ENCODE measurements at regions of chr18 and their contacts with region 1.

Region 1: DNA sequence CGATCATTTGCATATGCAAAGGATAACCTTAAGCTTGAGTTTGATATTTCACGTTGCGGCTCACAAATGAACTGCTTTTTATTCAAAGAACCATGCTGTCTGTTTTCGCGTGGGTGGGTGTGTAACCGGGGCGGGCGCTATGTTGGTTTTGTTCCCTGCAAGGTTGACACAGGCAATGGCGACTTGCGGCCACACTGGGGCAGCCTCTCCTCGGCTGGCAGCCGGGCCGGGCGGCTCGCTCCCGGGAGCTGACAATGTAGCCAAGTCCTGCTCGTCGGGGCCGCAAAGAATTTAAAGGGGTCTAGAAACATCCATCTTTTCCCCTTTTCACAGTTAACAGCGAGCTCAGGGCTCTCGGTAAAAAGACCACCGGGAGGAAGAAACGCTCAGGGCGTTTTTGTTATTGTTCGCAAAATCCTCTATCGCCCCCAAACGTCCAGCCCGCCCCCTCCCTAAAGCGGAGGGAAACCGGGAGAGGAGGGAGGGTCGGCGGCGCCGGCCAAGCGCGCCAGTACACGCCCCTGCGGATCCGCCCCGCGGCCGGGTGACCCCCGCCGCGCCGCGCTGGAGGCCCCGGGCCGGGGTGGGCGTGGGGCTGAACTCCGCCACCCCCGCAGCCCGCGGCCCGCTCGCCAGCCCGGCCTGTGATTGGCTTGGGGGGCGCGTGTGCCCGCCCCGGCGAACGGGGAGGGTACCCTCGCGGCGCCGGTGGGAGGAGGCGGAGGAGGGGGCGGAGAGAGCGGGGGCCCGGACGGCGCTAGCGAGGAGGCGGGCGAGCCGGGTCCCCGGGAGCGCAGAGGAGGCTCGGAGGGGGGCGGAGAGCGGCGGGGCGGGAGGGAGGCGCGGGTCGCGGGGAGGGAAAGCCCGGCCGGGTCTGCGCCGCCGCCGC is at the start of gene NEDD4L:
- DNase-seq: peak; percentile 55 to 78 (median 73)
- ATAC-seq: peak; percentile 88
- H3K4me3 ChIP-seq: peak within 1 kb of the TSS; percentile 69
- H3K4me3 Mint-ChIP-seq: peak within 1 kb of the TSS; percentile 88 to 96 (median 93)
- H3K27ac ChIP-seq: peak within 1 kb of the TSS; percentile 54
- H3K27ac Mint-ChIP-seq: peak within 1 kb of the TSS; percentile 34 to 89 (median 70)
- H3K4me1 ChIP-seq: peaks cover 0 to 8% of the 10 kb centered on the region in 2 donors
- H3K4me1 Mint-ChIP-seq: peaks cover 18 to 30% (median 25%) of the 10 kb centered on the region in 7 donors
- H3K27me3 ChIP-seq: no peaks in the 10 kb centered on the region
- H3K27me3 Mint-ChIP-seq: peaks cover 0 to 57% (median 0%) of the 10 kb centered on the region in 5 donors
- total RNA-seq, gene NEDD4L: 3.7 to 10.3 (median 4.2) TPM

Region 2: GRCh38 chr18:57621246-57621604 is 422.5 kb before region 1 on chr18:
- CTCF ChIA-PET with region 1: no interaction called
- POLR2A ChIA-PET with region 1: no interaction called
- intact Hi-C with region 1: loop called in 1 of 2 experiments (anchors 2 kb)
- DNase-seq: no peak
- ATAC-seq: peak; percentile 4
- H3K4me3 ChIP-seq: peak overlapping the region; percentile 84
- H3K4me3 Mint-ChIP-seq: peak overlapping the region; percentile 89 to 99 (median 96)
- H3K27ac ChIP-seq: peak overlapping the region; percentile 85
- H3K27ac Mint-ChIP-seq: peak overlapping the region; percentile 93 to 99 (median 98)
- H3K4me1 ChIP-seq: peaks cover 13 to 19% of the 10 kb centered on the region in 2 donors
- H3K4me1 Mint-ChIP-seq: peaks cover 9 to 44% (median 34%) of the 10 kb centered on the region in 7 donors
- H3K27me3 ChIP-seq: no peaks in the 10 kb centered on the region
- H3K27me3 Mint-ChIP-seq: no peaks in the 10 kb centered on the region

Region 3: GRCh38 chr18:57941841-57942489 is 101.8 kb before region 1 on chr18:
- CTCF ChIA-PET with region 1: no interaction called
- POLR2A ChIA-PET with region 1: no interaction called
- intact Hi-C with region 1: no loop called
- DNase-seq: no peak
- ATAC-seq: no peak
- H3K4me3 ChIP-seq: no peak overlapping the region
- H3K4me3 Mint-ChIP-seq: no peak overlapping the region
- H3K27ac ChIP-seq: no peak overlapping the region
- H3K27ac Mint-ChIP-seq: no peak overlapping the region
- H3K4me1 ChIP-seq: no peaks in the 10 kb centered on the region
- H3K4me1 Mint-ChIP-seq: no peaks in the 10 kb centered on the region
- H3K27me3 ChIP-seq: no peaks in the 10 kb centered on the region
- H3K27me3 Mint-ChIP-seq: peaks cover 11 to 36% (median 27%) of the 10 kb centered on the region in 5 donors

Region 4: DNA sequence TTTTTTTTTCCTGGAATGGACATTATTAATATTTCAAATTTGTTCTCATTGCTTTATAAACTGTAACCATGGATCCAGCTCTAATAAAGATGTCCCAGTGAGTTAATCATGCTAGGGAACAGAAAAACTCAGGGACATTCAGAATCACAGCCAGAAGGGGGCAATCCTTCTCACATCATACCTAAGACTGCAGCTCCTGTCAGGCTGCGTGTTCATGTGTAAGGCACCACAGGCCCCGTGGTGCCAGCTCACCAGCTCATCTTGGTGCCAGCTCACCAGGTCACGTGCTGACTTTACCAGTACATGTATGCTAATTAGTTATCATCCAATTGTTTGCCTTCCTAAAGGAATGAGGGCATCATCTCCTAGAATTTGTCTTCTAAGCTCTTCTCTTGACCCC is 84.5 kb before region 1 on chr18:
- CTCF ChIA-PET with region 1: no interaction called
- POLR2A ChIA-PET with region 1: no interaction called
- intact Hi-C with region 1: loop called in 1 of 2 experiments (anchors 5 kb)
- DNase-seq: peak in 1 of 9 donors; percentile 2
- ATAC-seq: no peak
- H3K4me3 ChIP-seq: no peak overlapping the region
- H3K4me3 Mint-ChIP-seq: no peak overlapping the region
- H3K27ac ChIP-seq: no peak overlapping the region
- H3K27ac Mint-ChIP-seq: no peak overlapping the region
- H3K4me1 ChIP-seq: no peaks in the 10 kb centered on the region
- H3K4me1 Mint-ChIP-seq: peaks cover 0 to 3% (median 0%) of the 10 kb centered on the region in 7 donors
- H3K27me3 ChIP-seq: no peaks in the 10 kb centered on the region
- H3K27me3 Mint-ChIP-seq: peaks cover 11 to 30% (median 25%) of the 10 kb centered on the region in 5 donors

Region 5: DNA sequence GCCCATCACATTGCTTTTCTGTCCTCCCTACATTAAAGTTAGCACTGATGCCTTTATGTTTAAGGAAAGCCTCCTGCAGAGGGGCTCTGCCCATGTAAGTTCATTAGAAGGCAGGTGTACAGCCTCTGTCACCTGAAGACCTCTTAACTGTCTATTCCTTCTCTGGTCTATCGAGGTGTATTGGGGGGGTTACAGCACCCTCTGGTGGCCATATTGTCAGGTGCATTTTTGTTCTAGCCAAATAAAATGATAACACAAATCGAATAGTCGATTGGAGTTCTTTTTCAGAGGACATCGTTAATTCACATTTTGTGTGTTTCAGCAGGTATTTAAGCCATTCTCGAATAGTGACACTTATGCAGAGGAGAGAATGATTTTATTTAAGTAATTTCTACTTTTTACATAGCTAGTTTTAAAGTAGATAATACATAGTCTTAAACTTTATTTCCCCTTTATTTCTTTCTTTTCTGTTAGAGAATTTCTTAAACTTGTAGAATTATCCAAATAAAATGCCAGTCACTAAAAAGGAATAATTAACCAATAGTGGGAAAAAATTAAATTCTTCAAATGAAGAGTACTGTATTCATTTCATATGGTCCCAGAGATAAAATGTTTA is 137.1 kb after region 1 on chr18:
- CTCF ChIA-PET with region 1: interaction called, 4 read pairs
- POLR2A ChIA-PET with region 1: no interaction called
- intact Hi-C with region 1: loop called (anchors 1 kb)
- DNase-seq: peak; percentile 25 to 68 (median 50)
- ATAC-seq: peak; percentile 81
- H3K4me3 ChIP-seq: no peak overlapping the region
- H3K4me3 Mint-ChIP-seq: no peak overlapping the region
- H3K27ac ChIP-seq: no peak overlapping the region
- H3K27ac Mint-ChIP-seq: no peak overlapping the region
- H3K4me1 ChIP-seq: no peaks in the 10 kb centered on the region
- H3K4me1 Mint-ChIP-seq: peaks cover 0 to 4% (median 0%) of the 10 kb centered on the region in 7 donors
- H3K27me3 ChIP-seq: peaks cover 0 to 6% of the 10 kb centered on the region in 2 donors
- H3K27me3 Mint-ChIP-seq: peaks cover 0 to 12% (median 4%) of the 10 kb centered on the region in 5 donors

Region 6: GRCh38 chr18:58768293-58768974 is 724.7 kb after region 1 on chr18:
- CTCF ChIA-PET with region 1: no interaction called
- POLR2A ChIA-PET with region 1: no interaction called
- intact Hi-C with region 1: loop called in 1 of 2 experiments (anchors 2 kb)
- DNase-seq: peak; percentile 40 to 71 (median 60)
- ATAC-seq: peak; percentile 89
- H3K4me3 ChIP-seq: no peak overlapping the region
- H3K4me3 Mint-ChIP-seq: peak overlapping the region in 8 of 10 donors; percentile 36 to 81 (median 66)
- H3K27ac ChIP-seq: no peak overlapping the region
- H3K27ac Mint-ChIP-seq: no peak overlapping the region
- H3K4me1 ChIP-seq: peaks cover 6 to 17% of the 10 kb centered on the region in 2 donors
- H3K4me1 Mint-ChIP-seq: peaks cover 0 to 19% (median 16%) of the 10 kb centered on the region in 7 donors
- H3K27me3 ChIP-seq: peaks cover 0 to 10% of the 10 kb centered on the region in 2 donors
- H3K27me3 Mint-ChIP-seq: peaks cover 30 to 63% (median 37%) of the 10 kb centered on the region in 5 donors